Naive thymus-derived CD8-positive, alpha-beta T cell (primary cell): ENCODE measurements at regions of chr10 and their contacts with region 1.

Region 1: DNA sequence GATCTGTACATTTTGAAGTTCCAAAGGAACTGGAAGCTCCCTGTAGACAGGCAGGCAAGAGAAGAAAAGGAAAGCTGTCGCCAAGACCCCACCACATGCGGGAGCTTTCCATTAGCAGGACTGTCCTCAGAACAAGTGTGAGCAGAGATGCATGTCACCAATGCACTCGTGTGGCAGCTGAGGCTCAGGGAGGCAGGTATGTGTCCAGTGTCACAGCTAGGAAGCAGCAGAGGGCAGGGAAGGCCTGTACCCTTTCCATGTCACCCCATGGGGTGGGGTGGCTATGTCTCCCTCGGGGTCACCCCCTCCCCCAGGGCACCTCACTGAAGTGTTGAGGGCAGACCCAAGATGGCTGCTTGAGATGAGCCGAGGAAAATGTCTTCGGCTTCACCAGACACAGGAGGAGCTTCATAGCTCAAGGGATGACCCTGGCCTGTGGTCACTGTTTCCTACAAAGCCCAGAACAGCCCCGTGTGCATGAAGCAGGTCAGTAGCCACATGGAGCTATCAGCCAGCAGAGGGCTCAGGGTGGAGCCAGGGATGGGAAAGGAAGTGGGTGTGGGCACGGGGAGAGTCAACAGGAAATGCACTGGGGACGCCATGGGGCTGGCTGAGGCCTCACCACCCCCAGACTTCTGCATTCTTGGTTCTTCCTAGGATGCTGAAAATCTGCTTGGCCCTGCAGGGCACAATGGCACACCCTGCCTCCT is 96.6 kb downstream of the FAM53B start:
- DNase-seq: peak; percentile 21 to 84 (median 64)
- ATAC-seq: peak; percentile 70 to 78
- H3K4me3 Mint-ChIP-seq: peak overlapping the region; percentile 69 to 84 (median 76)
- H3K27ac Mint-ChIP-seq: peak overlapping the region; percentile 84 to 99 (median 92)
- H3K4me1 Mint-ChIP-seq: peaks cover 36 to 99% (median 74%) of the 10 kb centered on the region in 4 donors
- H3K27me3 Mint-ChIP-seq: no peaks in the 10 kb centered on the region

Region 2: GRCh38 chr10:124604214-124605000 is 43.2 kb before region 1 on chr10:
- POLR2A ChIA-PET with region 1: no interaction called
- DNase-seq: peak in 1 of 10 donors; percentile 60
- ATAC-seq: no peak
- H3K4me3 Mint-ChIP-seq: no peak overlapping the region
- H3K27ac Mint-ChIP-seq: peak overlapping the region in 2 of 10 donors; percentile 14 to 60
- H3K4me1 Mint-ChIP-seq: peaks cover 6 to 40% (median 9%) of the 10 kb centered on the region in 4 donors
- H3K27me3 Mint-ChIP-seq: no peaks in the 10 kb centered on the region

Region 3: DNA sequence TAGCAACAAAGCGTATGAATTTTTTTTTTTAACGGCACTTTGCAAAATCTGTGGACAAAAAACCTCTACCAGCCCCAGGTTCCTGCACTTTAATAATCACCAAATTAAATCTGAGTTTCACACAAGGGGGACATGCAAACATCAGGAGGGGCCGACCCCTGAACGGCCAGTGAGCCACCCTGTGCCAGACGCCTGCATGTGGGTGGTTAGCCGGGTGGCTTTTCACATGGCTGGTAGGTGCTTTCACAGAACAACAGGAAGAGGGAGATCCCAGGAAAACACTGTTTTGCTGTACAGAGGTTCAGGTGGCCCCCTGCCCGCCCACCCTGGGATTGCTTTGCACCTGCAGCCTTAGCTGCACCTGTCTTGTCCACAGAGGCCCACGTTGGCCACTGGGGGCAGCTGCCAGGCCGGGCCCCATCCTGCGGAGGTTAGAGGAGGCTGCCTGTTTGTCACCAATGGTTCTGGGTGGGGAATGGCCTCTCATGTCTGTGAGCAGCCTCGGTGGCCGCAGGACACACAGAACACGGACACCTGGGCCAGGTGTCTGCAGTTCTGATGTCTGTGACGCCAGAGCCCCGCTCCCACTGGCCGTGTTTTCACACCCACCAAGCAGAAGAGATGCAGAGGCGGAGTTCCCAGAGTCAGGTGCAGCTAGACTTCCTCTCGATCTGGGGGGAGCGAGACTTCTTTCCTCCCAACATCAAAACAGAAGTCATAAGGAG is 11.1 kb before region 1 on chr10:
- POLR2A ChIA-PET with region 1: interaction called, 13 read pairs
- DNase-seq: peak in 6 of 10 donors; percentile 13 to 49 (median 38)
- ATAC-seq: peak; percentile 84 to 87
- H3K4me3 Mint-ChIP-seq: peak overlapping the region; percentile 67 to 85 (median 78)
- H3K27ac Mint-ChIP-seq: peak overlapping the region; percentile 77 to 99 (median 90)
- H3K4me1 Mint-ChIP-seq: peaks cover 32 to 96% (median 60%) of the 10 kb centered on the region in 4 donors
- H3K27me3 Mint-ChIP-seq: no peaks in the 10 kb centered on the region

Region 4: DNA sequence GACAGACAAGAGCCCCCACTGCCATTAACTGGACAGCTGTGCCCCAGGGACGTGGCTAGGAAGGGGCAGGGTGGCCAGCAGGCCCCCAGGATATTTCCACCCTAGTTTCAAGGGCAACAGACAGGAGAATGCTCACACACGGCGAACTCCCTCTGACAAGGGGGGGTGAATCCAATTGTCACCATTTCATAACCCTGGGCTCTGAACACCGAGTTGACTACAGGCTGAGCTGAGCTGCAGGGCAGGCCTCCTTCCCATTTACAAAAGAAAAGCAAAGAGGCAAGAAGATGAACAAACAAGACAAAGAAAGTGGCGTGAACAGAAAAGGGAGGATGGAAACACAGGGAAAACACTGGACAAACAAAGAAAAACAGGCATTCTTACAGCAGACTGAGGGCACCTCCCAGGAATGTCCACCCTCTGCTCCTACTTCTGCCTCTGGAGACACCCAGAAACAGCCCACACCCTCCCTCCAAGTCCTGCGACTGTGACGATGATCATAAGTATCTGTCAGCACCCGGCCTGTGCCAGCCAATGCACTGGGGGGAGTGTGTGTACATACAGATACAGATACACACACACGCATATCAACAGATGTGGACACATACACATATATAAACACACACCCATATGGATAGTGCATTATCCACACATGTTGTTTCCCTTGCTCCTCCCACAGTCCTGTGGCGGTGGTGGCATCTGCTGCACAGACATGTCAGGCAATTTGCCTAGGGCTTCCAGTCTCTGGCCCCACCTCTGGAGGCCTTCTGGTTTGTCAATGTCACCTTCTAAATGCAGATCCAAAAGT is 30.4 kb after region 1 on chr10:
- POLR2A ChIA-PET with region 1: interaction called, 12 read pairs
- DNase-seq: no peak
- ATAC-seq: peak in 1 of 2 donors; percentile 11
- H3K4me3 Mint-ChIP-seq: peak overlapping the region; percentile 67 to 84 (median 77)
- H3K27ac Mint-ChIP-seq: peak overlapping the region; percentile 35 to 94 (median 80)
- H3K4me1 Mint-ChIP-seq: peaks cover 48 to 98% (median 84%) of the 10 kb centered on the region in 4 donors
- H3K27me3 Mint-ChIP-seq: no peaks in the 10 kb centered on the region

Region 5: DNA sequence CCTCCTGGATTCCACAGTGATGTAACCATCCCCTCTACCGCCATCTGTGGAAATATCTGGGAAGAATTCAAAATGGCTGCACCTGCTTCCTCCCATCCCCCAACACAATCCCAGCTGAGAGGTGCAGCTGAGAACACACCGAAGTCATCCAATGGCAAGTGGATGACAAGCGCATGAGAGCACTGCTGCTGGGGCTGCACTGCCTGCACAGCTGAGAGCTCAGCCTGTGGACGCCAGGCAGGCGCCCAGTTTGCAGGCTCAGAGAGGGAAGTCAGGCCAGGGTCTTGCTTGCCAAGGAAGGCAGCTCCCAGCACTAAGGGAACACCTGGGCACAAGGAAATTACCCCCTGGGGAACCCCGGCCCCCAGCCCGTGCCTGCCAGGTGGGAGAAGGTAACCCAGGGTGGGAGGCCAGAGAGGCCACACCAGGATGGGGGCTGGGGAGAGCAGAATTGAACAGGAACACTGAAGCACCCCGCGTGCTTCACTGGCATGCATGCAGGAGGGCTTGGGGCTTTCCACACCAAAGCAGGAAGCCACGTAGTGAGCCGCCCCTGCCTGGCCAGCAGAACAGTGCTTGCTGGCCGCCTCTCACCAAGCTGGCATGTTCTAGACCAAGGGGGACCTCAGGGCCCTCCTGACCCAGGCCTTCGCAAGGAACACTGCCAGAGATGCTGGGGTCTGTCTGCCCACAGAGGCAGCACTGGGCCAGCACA is 50.4 kb after region 1 on chr10:
- POLR2A ChIA-PET with region 1: interaction called, 12 read pairs
- DNase-seq: peak in 2 of 10 donors; percentile 14 to 30
- ATAC-seq: peak; percentile 60 to 72
- H3K4me3 Mint-ChIP-seq: peak overlapping the region in 9 of 10 donors; percentile 20 to 82 (median 76)
- H3K27ac Mint-ChIP-seq: peak overlapping the region; percentile 85 to 97 (median 92)
- H3K4me1 Mint-ChIP-seq: peaks cover 47 to 99% (median 92%) of the 10 kb centered on the region in 4 donors
- H3K27me3 Mint-ChIP-seq: no peaks in the 10 kb centered on the region

Region 6: GRCh38 chr10:124741281-124741921 is 93.8 kb after region 1 on chr10:
- POLR2A ChIA-PET with region 1: interaction called, 41 read pairs
- DNase-seq: peak; percentile 60 to 85 (median 74)
- ATAC-seq: peak; percentile 55 to 59
- H3K4me3 Mint-ChIP-seq: peak overlapping the region; percentile 73 to 99 (median 96)
- H3K27ac Mint-ChIP-seq: peak overlapping the region; percentile 73 to 96 (median 87)
- H3K4me1 Mint-ChIP-seq: peaks cover 45 to 76% (median 71%) of the 10 kb centered on the region in 4 donors
- H3K27me3 Mint-ChIP-seq: no peaks in the 10 kb centered on the region